Right ventricle myocardium inferior (tissue), 1 donor: ENCODE measurements at regions of chr2 and their contacts with region 1.

Region 1: DNA sequence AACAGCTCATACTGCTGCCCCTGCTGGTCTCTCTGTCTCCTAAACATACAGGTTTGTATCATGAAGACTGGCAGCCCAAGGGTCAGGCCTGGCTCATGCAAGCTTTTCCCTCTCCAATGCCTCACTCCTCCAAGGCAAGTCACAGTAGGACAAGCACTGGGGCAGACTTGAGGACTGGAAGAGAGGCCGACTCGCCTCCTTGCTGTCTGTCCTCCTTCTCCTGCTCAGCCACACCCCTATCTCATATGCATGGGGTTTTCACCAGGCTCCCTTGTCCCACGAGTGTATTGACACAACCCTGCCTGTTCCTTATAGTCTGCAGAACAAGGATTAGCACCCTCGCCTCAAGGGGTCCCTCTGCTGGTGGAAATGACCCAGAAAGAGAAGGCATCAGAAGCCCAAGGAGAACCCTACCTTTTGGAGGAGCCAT is 223.7 kb downstream of the SOX11 start:
- DNase-seq: no peak
- ATAC-seq: no peak

Region 2: GRCh38 chr2:5373200-5373599 is 542.7 kb before region 1 on chr2:
- intact Hi-C with region 1: no loop called
- DNase-seq: no peak
- ATAC-seq: no peak

Region 3: DNA sequence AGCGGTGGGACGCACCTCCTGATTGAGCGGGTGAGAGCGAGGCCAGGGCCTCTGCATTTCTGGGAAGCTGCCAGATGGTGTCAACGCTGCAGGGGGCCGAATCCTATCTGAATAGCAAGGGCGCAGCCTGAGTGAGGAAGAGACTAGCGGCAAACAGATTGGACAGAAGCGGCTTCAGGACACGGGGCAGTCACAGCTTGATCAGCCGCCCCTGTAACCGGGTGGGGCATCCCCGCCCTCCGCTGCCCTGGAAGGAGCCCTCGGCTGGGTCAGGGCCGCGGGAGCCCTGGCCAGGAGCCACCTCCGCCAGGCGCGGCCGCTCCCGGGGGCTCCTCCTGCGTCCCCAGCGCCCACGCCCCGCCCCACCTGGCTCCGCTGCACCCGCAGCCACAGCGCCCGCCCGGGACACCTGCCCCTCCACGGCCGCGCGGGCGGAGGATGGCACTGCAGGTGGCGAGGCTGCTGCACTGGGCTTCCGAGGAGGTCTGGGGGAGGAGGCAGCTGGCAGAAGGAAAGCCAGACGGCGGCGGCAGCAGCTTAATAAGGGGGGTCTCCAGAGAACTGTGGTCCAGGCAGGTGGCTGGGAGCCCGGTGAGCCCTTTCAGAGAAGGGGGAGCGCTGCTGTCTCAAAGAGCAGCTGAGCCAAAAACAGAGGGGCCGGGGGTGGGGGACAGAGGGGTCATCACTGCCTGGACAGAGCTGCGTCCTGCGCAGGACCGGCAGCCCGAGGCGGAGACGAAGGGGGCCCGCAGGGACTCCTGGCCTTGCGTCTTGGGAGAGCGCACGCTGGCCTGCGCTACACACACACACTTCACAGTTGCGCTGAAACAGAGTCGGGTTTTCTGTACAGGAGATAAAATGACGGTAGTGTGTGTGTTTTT is 242.5 kb before region 1 on chr2:
- intact Hi-C with region 1: no loop called
- DNase-seq: no peak
- ATAC-seq: no peak

Region 4: DNA sequence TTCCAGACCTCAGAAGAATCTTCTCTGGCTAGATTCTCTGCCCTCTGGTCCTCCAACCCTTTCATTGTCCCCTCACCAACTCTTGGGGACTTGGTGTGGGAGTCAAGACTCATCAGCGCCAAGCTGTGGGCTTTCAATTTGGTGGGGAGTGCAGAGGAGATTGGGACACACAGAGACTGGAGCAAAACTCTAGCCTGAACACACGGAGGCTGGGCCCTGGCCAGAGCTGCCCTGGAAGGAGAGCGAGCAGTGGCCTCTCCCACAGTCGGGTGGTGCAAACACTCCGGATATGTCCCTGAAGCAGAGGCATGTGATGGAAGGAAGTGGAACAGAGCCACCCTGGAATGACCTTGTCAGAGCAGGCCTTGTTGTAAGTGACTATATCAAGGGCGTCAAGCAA is 232.4 kb before region 1 on chr2:
- intact Hi-C with region 1: no loop called
- DNase-seq: peak; percentile 44
- ATAC-seq: no peak

Region 5: GRCh38 chr2:5695981-5696745 is 219.7 kb before region 1 on chr2:
- intact Hi-C with region 1: loop called (anchors 2 kb)
- DNase-seq: no peak
- ATAC-seq: peak; percentile 30